ENCODE measurements at regions of chr12 and their contacts with region 1.

Region 1: DNA sequence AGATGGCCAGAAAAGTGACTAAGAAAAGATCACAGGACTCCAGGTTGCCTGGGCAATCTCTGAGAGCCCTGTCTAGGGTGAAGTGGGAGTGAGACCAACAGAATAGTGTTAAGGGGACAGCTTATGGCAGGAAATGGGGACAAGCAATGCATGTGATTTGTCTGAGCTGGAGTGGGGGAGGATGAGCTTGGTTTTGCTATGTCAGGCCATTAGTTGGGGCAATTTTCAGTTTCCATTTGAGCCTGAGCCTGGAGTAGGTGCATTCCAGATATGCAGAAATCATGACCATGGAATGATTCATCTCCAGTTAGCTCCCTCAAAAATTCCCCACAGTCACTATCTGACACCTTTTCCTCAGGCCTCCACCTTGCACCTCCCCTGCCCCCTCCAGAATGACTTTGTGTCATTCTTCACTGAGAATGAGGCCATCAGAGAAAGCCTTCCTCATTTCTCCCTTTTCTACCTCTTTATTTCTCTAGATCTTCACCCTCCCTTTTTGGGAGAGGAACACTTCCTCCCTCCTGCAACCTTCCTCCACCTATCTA is 150.9 kb upstream of the PLEKHG7 start:
- DNase-seq: no peak
- H3K4me3 Mint-ChIP-seq: no peak overlapping the region
- H3K27ac Mint-ChIP-seq: no peak overlapping the region
- H3K4me1 Mint-ChIP-seq: peaks cover 26% of the 10 kb centered on the region
- H3K27me3 Mint-ChIP-seq: no peaks in the 10 kb centered on the region

Region 2: DNA sequence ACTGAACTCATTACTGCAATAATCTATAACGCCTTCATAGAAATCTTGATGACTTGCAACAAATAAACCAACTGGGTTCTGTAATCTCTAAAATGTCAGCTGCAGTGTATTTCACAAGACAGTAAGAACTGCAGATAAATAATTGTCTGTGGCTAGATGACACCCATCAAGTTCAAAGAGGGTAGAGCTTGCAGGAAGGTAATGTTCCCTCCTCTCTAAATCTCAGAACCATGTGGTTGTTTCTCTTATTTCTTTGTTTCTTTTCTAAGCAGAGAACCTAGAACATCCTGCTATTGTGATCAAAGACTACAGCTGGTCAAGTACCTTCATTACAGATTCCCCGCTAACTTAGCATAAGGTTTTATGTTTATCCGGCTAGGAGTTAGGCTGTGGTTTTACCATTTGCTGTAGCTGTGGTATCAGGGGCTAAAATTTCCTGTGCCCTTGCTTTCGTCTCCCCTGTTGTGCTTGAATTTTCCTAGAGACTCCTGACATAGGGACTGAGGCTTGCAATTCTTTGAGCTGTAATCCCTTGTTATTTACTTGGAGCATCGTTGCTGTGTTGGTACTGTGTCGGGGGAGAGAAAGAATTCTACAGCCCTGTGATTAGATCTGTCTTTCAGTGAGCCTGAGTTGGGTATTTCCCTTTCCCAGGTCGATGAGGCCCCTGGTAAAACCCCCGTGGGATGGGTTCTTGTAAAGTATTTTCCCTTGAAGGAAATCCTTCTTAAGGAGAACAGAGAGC is 153.2 kb before region 1 on chr12:
- CTCF ChIA-PET with region 1: no interaction called
- POLR2A ChIA-PET with region 1: interaction called, 16 read pairs
- DNase-seq: no peak
- H3K4me3 Mint-ChIP-seq: peak overlapping the region; percentile 18
- H3K27ac Mint-ChIP-seq: peak overlapping the region; percentile 77
- H3K4me1 Mint-ChIP-seq: peaks cover 84% of the 10 kb centered on the region
- H3K27me3 Mint-ChIP-seq: no peaks in the 10 kb centered on the region

Region 3: GRCh38 chr12:92539113-92539749 is 12.7 kb before region 1 on chr12:
- CTCF ChIA-PET with region 1: no interaction called
- POLR2A ChIA-PET with region 1: interaction called, 17 read pairs
- DNase-seq: peak; percentile 39
- H3K4me3 Mint-ChIP-seq: no peak overlapping the region
- H3K27ac Mint-ChIP-seq: peak overlapping the region; percentile 94
- H3K4me1 Mint-ChIP-seq: peaks cover 68% of the 10 kb centered on the region
- H3K27me3 Mint-ChIP-seq: no peaks in the 10 kb centered on the region

Region 4: GRCh38 chr12:92649511-92650227 is 97.7 kb after region 1 on chr12:
- CTCF ChIA-PET with region 1: no interaction called
- POLR2A ChIA-PET with region 1: no interaction called
- DNase-seq: peak; percentile 62
- H3K4me3 Mint-ChIP-seq: no peak overlapping the region
- H3K27ac Mint-ChIP-seq: no peak overlapping the region
- H3K4me1 Mint-ChIP-seq: peaks cover 6% of the 10 kb centered on the region
- H3K27me3 Mint-ChIP-seq: peaks cover 2% of the 10 kb centered on the region

Measured in activated CD4-positive, alpha-beta memory T cell treated with anti-CD3 and anti-CD28 coated beads, Interleukin-2, amount 10 ng/mL, durations not matched to agents 7 days and 5 days (primary cell).